Activated B cell treated with CpG ODN at 0.5 μM for 24 hours (primary cell): ENCODE measurements at regions of chr13 and their contacts with region 1.

Region 1: DNA sequence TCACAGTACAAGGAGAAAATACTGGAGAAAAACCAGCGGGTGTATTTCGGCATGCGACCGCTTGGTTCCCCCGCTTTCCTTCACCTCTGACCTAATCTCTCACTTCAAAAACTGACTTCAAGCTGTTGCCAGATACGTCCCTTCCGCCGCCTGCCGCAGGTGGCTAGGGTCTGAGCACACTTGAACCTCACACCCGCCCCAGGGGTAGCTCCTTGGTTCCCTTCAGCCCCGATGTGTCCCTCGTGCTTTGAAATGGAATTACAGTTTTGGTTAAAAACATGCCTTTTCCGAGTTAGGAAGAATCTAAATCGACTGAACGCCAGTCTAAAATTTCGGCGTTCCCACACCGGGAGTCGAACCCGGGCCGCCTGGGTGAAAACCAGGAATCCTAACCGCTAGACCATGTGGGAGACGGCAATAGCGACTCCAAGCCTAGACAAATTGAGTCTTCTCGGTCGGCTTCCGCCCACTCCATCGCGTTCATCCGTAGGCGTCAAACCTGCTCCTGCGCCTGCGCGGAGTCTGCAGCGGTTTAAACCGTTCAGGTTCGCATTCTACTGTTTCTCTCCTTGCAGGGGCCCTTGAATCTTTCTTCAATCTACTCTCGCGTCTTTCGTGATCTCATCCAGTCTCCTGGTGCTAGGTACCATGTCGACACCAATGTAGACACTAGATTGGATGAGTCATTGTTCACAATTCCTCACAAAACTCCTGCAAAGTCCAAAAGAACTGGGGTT is 71.5 kb downstream of the NUFIP1 start:
- DNase-seq: peak; percentile 96
- ATAC-seq: peak; percentile 77
- H3K4me3 Mint-ChIP-seq: no peak overlapping the region
- H3K27ac Mint-ChIP-seq: no peak overlapping the region
- H3K4me1 Mint-ChIP-seq: peaks cover 2% of the 10 kb centered on the region
- H3K27me3 Mint-ChIP-seq: no peaks in the 10 kb centered on the region
- CTCF ChIP-seq: no peak

Region 2: GRCh38 chr13:43878892-43879754 is 1038.6 kb before region 1 on chr13 and contains the start of gene CCDC122:
- CTCF ChIA-PET with region 1: no interaction called
- POLR2A ChIA-PET with region 1: no interaction called
- intact Hi-C with region 1: loop called (anchors 1 kb)
- DNase-seq: peak; percentile 83
- ATAC-seq: peak; percentile 86
- H3K4me3 Mint-ChIP-seq: peak within 1 kb of the TSS; percentile 93
- H3K27ac Mint-ChIP-seq: peak within 1 kb of the TSS; percentile 93
- H3K4me1 Mint-ChIP-seq: peaks cover 32% of the 10 kb centered on the region
- H3K27me3 Mint-ChIP-seq: no peaks in the 10 kb centered on the region
- CTCF ChIP-seq: no peak
- total RNA-seq, gene CCDC122: 7.1 and 8.0 TPM in 2 replicates

Region 3: DNA sequence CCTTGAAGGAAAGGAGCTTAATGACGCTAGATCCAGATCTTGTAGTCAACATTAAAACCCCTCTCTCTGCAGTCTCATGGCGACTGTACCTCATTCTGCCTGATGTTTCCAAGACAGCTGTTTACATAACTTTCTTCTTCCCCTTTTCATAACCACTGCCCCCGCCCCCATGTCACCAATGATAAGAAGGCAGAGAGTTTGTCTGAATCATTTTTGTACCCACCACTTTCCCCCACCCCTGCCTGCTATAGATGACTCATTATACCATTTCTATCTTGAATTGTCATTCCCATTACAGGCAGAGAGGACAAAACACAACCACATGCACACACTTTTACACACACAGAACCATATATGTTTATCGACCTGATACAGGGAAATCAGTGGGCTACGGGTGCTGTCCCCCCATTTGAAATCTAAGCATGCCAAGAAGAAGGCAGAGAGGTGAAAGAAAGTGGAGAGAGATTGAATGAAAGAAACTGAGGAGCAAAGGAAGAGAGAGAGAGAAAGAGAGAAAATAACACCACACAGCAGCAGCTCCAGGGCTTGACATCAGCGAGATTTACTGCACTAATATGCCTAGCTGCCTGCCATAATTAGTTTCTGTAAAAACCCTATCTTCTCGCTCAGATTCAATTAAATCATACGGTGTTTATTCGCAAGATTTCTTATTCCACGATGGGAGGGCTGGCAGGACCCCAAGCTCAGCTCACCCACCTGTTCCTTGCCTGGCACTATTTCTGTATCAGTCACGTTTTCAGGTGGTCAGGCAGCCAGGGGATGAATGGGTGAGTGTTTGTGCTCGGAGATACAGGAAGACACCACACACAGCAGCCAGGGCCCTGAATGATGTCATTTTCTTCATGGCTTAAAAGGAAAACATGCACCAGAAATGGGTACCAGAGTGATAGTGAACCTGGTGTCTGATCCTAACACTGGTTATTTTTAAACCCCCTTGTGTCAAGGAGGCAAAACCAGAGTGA is 658.4 kb before region 1 on chr13:
- CTCF ChIA-PET with region 1: no interaction called
- POLR2A ChIA-PET with region 1: no interaction called
- intact Hi-C with region 1: loop called (anchors 5 kb)
- DNase-seq: peak; percentile 36
- ATAC-seq: peak; percentile 92
- H3K4me3 Mint-ChIP-seq: peak overlapping the region; percentile 74
- H3K27ac Mint-ChIP-seq: peak overlapping the region; percentile 80
- H3K4me1 Mint-ChIP-seq: peaks cover 19% of the 10 kb centered on the region
- H3K27me3 Mint-ChIP-seq: no peaks in the 10 kb centered on the region
- CTCF ChIP-seq: no peak

Region 4: GRCh38 chr13:44484562-44485138 is 433.1 kb before region 1 on chr13:
- CTCF ChIA-PET with region 1: interaction called, 9 read pairs
- POLR2A ChIA-PET with region 1: interaction called, 3 read pairs
- intact Hi-C with region 1: loop called (anchors 1 kb)
- DNase-seq: no peak
- ATAC-seq: peak; percentile 54
- H3K4me3 Mint-ChIP-seq: peak overlapping the region; percentile 58
- H3K27ac Mint-ChIP-seq: peak overlapping the region; percentile 30
- H3K4me1 Mint-ChIP-seq: peaks cover 21% of the 10 kb centered on the region
- H3K27me3 Mint-ChIP-seq: no peaks in the 10 kb centered on the region
- CTCF ChIP-seq: no peak

Region 5: GRCh38 chr13:44868397-44868796 is 49.4 kb before region 1 on chr13:
- CTCF ChIA-PET with region 1: no interaction called
- POLR2A ChIA-PET with region 1: no interaction called
- intact Hi-C with region 1: no loop called
- DNase-seq: no peak
- ATAC-seq: no peak
- H3K4me3 Mint-ChIP-seq: no peak overlapping the region
- H3K27ac Mint-ChIP-seq: no peak overlapping the region
- H3K4me1 Mint-ChIP-seq: no peaks in the 10 kb centered on the region
- H3K27me3 Mint-ChIP-seq: peaks cover 8% of the 10 kb centered on the region
- CTCF ChIP-seq: no peak

Region 6: DNA sequence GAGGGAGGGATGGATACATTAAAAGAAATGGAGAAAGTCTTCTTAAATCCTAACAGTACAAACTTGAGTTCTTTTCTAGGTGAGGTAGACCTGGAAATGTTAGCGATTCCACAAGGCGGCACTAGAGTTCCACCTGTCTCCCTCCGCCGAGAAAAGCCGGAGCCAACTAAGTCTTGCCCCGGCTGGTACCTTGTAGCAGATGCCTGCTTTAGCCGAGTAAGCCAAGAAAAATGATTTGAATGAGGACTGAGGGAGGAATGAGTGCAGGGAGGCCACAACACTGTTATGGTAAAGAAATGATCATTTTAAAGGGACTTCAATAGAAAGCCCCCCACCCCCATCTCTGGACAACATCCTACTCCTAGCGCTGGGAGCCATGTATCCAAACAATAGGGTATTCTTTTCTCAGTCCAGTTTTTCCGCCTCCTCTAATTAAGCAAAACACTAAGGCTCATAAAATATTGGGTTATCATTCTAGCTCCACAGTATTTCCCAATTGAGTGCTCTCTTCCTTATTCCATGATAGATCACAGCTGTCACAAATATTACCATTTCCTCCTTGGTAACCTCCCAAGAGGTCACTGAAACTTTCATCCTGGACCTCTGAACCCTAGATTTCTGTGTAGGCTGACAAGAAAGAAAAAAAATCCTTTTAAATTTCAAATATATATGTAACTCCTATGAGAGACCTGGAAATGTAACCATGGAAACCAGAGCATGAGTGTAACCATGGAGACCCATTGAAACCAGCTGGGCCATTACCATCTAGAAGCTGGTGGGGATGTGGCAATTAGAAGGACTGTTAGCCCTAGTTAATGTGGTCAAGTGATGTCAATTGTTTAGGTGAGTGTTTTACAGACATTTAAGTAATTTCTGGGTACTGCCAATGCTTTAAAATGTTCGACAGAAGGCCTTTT is 129.9 kb after region 1 on chr13:
- CTCF ChIA-PET with region 1: interaction called, 3 read pairs
- POLR2A ChIA-PET with region 1: no interaction called
- intact Hi-C with region 1: loop called (anchors 5 kb)
- DNase-seq: peak; percentile 51
- ATAC-seq: peak; percentile 81
- H3K4me3 Mint-ChIP-seq: peak overlapping the region; percentile 71
- H3K27ac Mint-ChIP-seq: no peak overlapping the region
- H3K4me1 Mint-ChIP-seq: peaks cover 17% of the 10 kb centered on the region
- H3K27me3 Mint-ChIP-seq: peaks cover 13% of the 10 kb centered on the region
- CTCF ChIP-seq: peak; percentile 72

Region 7: GRCh38 chr13:45417790-45418534 is 500.2 kb after region 1 on chr13 and contains the start of gene SLC25A30:
- CTCF ChIA-PET with region 1: no interaction called
- POLR2A ChIA-PET with region 1: no interaction called
- intact Hi-C with region 1: loop called (anchors 1 kb)
- DNase-seq: peak; percentile 87
- ATAC-seq: peak; percentile 96
- H3K4me3 Mint-ChIP-seq: peak within 1 kb of the TSS; percentile 95
- H3K27ac Mint-ChIP-seq: peak within 1 kb of the TSS; percentile 97
- H3K4me1 Mint-ChIP-seq: peaks cover 22% of the 10 kb centered on the region
- H3K27me3 Mint-ChIP-seq: no peaks in the 10 kb centered on the region
- CTCF ChIP-seq: no peak
- total RNA-seq, gene SLC25A30: 19.0 and 19.3 TPM in 2 replicates